Psoas muscle (tissue), 8 donors: ENCODE measurements at regions of chr7 and their contacts with region 1.

Region 1: GRCh38 chr7:45089341-45089891 is 647 bp upstream of the NACAD start:
- DNase-seq: peak; percentile 55 to 70
- ATAC-seq: peak in 3 of 4 donors; percentile 16 to 59 (median 50)
- H3K4me3 ChIP-seq: peak overlapping the region; percentile 76
- H3K27ac ChIP-seq: no peak overlapping the region
- H3K4me1 ChIP-seq: no peaks in the 10 kb centered on the region
- H3K27me3 ChIP-seq: peaks cover 0 to 9% (median 0%) of the 10 kb centered on the region in 3 donors
- CTCF ChIP-seq: no peak

Region 2: DNA sequence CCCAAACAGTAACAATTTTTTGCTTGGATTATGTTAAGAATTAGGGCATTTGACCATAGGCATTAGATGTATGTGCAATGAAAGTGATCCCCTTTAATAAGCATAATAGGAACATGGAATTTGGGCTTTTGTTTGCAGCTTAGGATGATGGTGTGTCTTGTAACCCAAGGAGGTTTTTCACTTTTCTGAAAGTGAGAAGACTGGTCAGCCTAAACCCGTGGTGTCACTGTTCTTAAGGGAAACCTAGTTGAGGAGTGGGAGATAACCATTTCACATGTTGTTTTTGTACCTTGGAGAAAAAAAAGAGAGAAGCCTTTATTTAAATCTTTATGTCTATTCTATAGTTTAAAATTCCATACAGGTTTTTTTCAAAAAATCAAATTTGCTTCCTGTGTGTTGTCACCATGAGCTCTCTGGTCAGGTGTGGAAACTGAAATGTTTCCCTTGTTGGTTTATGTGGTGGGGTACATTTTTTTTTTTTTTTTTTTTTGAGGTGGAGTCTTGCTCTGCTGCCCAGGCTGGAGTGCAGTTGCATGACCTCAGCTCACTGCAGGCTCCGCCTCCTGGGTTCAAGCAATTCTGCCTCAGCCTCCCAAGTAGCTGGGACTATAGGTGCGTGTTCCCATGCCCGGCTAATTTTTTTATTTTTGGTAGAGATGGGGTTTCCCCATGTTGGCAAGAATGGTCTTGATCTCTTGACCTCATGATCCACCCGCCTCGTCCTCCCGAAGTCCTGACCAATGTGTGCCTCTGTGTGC is 81.7 kb before region 1 on chr7:
- intact Hi-C with region 1: loop called in 1 of 2 experiments (anchors 5 kb)
- DNase-seq: no peak
- ATAC-seq: no peak
- H3K4me3 ChIP-seq: no peak overlapping the region
- H3K27ac ChIP-seq: no peak overlapping the region
- H3K4me1 ChIP-seq: peaks cover 16% of the 10 kb centered on the region
- H3K27me3 ChIP-seq: no peaks in the 10 kb centered on the region
- CTCF ChIP-seq: no peak